OCI-LY7 (cell line): ENCODE measurements at regions of chr10 and their contacts with region 1.

Region 1: GRCh38 chr10:88990384-88991160 is at the start of gene FAS:
- DNase-seq: peak; percentile 82
- H3K4me3 ChIP-seq: peak within 1 kb of the TSS; percentile 84
- H3K27ac ChIP-seq: peak within 1 kb of the TSS; percentile 50
- H3K4me1 ChIP-seq: peaks cover 45% of the 10 kb centered on the region
- CTCF ChIP-seq: no peak
- total RNA-seq, gene FAS: 7.7 and 10.1 TPM in 2 replicates

Region 2: DNA sequence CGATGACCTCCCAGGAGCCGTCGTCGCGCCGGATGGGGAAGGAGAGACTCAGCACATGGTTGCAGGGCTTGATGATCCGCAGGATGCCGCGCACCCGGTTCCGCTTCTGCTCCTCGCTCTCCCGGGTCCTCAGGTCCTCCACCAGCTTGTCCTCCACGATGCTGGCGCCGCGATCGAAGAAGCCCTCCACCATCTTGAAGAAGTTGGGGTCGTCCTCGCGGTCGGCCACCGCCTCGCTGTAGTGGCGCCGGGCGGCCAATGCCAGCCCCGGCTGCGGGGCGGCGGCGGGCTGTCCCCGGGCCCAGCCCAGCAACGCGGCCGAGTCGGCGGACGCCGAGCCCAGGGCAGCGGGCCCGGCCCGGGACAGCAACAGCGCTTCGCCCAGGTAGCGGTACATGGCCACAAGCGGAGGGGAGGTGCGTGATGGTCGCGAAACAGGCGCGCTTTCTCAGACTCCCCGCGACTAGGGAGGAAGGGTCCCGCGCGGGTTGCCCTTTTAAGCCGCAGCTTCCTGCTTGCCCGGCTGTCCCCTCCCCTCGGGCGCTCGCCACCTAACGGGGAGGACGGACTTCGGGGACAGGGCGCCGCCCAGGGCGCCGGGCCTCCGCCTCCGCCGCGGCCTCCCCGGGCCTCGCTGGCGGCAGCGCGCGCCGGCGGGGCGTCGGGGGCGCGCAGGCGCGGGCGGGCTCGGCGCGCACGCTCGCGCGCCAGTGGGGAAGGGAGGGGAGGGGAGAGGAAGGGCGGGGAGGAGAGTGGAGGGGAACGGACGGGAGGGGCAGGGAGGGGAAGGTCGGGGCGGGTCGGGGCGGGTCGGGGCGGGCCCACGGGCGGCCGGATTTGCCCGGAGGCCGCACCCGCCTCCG is 1896.0 kb before region 1 on chr10 and contains the starts of genes GLUD1 and SHLD2:
- CTCF ChIA-PET with region 1: no interaction called
- POLR2A ChIA-PET with region 1: no interaction called
- intact Hi-C with region 1: loop called (anchors 10 kb)
- DNase-seq: peak; percentile 94
- H3K4me3 ChIP-seq: peak within 1 kb of the TSS; percentile 92
- H3K27ac ChIP-seq: peak within 1 kb of the TSS; percentile 80
- H3K4me1 ChIP-seq: peaks cover 44% of the 10 kb centered on the region
- CTCF ChIP-seq: no peak
- total RNA-seq, gene GLUD1: 86.5 and 98.5 TPM in 2 replicates
- total RNA-seq, gene SHLD2: 32.8 and 34.3 TPM in 2 replicates

Region 3: DNA sequence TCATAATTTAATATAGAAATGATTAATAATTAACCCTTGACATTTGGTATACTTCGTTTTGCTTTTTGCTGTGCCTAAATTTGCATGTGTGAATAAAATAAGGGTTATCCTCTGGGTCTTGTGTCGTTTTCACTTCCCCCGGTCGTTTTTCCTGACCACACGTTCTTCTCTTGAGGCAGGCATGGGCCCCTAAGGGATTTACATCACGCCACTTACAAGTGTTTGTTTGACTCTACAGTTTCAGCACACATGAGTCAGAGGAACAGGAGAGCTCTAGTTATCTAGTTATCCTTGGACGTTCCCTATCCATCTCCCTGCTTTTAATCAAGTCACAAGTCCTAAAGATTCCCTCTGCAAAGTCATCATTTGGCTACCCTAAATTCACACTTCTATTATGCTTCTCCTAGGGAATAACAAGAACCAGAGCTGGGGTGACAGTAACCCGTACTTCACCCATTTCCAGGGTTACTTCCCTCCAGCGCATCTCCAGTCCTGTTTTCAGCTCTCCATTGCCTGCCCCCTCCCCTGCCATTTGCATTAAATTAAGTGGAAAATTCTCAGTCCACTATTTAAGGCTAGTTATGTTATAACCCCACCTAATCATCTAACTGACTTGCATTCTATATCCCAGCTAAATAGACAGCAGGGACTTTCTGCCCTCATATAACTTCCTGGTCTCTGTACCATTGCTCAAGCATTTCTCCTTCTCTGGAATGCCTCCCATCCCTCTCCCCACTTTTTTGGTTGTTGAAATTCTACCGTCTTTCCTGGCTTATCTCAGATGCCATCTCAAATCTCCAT is 920.3 kb before region 1 on chr10:
- CTCF ChIA-PET with region 1: no interaction called
- POLR2A ChIA-PET with region 1: no interaction called
- intact Hi-C with region 1: loop called (anchors 10 kb)
- DNase-seq: peak; percentile 71
- H3K4me3 ChIP-seq: peak overlapping the region; percentile 36
- H3K27ac ChIP-seq: peak overlapping the region; percentile 35
- H3K4me1 ChIP-seq: peaks cover 83% of the 10 kb centered on the region
- CTCF ChIP-seq: no peak

Region 4: DNA sequence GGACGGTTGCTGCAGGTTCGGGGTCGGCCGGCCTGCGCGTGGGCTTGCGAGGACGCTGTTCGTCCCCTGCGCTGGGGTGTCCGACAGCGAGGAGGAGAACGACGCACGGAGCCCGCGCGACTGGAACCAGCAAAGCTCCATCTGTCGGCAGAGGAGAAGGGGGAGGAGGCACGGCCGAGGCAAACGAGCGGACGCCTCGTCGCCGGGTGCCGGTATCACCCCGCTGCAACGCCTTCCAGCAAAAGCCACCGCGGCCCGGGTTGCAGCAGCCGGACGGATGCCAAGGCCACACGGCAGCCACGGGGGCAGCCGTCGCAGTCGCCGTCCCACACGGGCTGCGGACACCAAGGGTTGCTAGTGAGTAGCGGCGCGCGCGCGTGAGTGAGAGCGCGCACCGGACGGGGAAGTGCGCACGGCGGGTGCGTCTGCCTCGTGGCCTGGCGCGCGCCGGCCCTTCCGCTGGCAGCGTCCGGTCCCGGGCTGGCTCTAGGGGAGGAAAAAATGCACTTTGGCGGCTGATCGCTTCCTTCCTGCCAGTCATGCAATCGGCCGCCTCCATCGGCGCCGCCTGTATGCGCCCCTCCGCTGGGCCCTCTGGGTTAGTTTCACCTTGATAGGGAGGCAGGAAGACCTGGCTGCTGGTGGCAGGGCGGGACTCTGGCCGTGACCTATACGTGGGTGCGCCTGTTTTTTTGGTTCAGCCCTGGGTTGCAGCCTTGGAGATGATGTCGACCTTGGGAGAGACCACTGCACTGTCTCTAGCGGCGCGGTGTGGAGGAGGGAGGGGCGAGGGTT is 110.1 kb before region 1 on chr10:
- CTCF ChIA-PET with region 1: no interaction called
- POLR2A ChIA-PET with region 1: interaction called, 49 read pairs
- intact Hi-C with region 1: loop called (anchors 1 kb)
- DNase-seq: peak; percentile 91
- H3K4me3 ChIP-seq: peak overlapping the region; percentile 80
- H3K27ac ChIP-seq: peak overlapping the region; percentile 93
- H3K4me1 ChIP-seq: peaks cover 64% of the 10 kb centered on the region
- CTCF ChIP-seq: peak; percentile 43; the same call in 1 of the 2 replicates

Region 5: DNA sequence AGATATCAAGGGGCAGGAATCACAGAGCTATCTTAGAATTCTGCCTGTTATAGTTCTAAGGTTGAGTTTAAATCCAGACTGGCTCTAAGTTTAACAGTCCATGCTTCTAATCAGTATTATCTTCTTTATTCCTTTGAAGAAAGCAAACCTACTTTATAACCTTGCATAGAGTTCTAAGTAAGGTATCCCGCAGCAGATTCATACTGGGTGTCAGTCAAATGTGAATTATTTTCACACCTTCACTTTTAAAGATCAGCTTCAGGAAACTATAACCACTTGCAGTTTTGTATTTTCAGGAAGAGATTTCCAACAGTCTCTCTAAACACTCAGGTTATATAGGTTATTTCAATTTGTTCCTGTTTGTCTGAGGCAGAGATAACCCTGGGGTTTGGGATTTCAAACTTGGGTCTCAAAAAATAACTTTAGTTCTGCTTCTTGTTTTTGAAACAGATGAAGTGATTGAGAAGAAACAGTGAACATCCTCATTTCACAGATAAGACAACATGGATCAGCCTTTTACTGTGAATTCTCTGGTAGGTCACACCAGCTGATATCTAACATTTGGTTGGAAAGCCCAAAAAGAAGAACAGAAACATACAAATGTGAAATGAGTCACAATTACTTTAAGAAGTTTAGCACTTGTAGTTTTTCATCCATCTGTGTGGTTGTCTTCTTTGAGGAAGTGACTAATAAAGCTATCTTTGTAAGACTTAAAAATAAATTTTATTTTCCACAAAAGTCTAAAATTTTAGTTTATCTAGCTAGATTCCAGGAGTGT is 89.2 kb before region 1 on chr10:
- CTCF ChIA-PET with region 1: interaction called, 6 read pairs
- POLR2A ChIA-PET with region 1: interaction called, 18 read pairs
- intact Hi-C with region 1: no loop called
- DNase-seq: peak; percentile 80
- H3K4me3 ChIP-seq: peak overlapping the region; percentile 45
- H3K27ac ChIP-seq: peak overlapping the region; percentile 92
- H3K4me1 ChIP-seq: peaks cover 57% of the 10 kb centered on the region
- CTCF ChIP-seq: no peak

Region 6: DNA sequence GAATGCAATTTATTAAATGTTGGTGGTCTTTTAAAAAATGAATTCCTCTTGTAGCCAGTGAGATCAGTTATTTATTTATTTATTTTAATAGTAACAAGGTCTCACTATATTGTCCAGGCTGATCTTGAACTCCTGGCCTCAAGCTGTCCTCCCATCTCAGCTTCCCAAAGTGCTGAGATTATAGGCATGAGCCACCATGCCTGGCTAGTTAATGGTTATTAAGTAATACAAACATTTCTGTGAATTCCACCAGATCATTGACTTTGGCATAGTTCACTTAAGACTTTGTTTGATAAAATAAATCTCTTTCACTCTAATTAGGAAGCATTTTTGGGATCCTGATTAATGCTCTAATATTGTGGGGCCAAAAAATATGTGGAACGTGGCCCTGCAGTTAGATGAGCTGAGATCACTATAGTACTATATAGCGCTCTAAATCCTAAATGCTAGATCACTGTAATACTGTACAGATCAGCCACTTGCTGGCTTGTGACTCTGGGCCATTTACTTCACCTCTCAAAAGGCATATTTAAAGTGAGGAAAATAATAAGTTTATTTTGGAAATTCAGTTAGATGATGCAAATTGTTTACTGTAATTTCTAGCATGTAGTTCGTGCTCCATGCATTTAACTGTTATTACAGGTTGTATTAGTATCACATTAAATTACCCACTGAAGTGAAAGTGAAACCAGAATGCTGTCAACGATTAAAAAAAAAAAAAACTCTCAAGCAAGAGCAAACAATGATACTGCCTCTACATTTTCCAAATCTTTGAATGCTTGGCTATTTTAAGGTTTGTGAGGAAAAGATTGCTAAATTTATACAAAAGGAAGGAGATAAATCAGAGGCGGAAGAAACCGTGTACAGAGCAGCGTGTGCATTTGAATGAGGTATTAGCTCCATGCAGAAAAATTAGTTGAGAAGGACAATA is 15.9 kb before region 1 on chr10:
- CTCF ChIA-PET with region 1: interaction called, 3 read pairs
- POLR2A ChIA-PET with region 1: interaction called, 11 read pairs
- intact Hi-C with region 1: no loop called
- DNase-seq: peak; percentile 41
- H3K4me3 ChIP-seq: peak overlapping the region; percentile 66
- H3K27ac ChIP-seq: peak overlapping the region; percentile 0
- H3K4me1 ChIP-seq: peaks cover 5% of the 10 kb centered on the region
- CTCF ChIP-seq: no peak; the same call in 1 of the 2 replicates

Region 7: GRCh38 chr10:89643431-89644331 is 653.1 kb after region 1 on chr10:
- CTCF ChIA-PET with region 1: no interaction called
- POLR2A ChIA-PET with region 1: interaction called, 3 read pairs
- intact Hi-C with region 1: loop called (anchors 5 kb)
- DNase-seq: peak; percentile 96
- H3K4me3 ChIP-seq: peak overlapping the region; percentile 78
- H3K27ac ChIP-seq: peak overlapping the region; percentile 71
- H3K4me1 ChIP-seq: peaks cover 32% of the 10 kb centered on the region
- CTCF ChIP-seq: no peak